Mammary epithelial cell (primary cell): ENCODE measurements at regions of chr11 and their contacts with region 1.

Region 1: GRCh38 chr11:13261591-13262061 is 16.0 kb upstream of the BMAL1 start:
- DNase-seq: peak; percentile 89
- H3K4me3 ChIP-seq: no peak overlapping the region
- H3K27ac ChIP-seq: peak overlapping the region; percentile 100
- H3K4me1 ChIP-seq: peaks cover 59% of the 10 kb centered on the region
- H3K27me3 ChIP-seq: no peaks in the 10 kb centered on the region
- CTCF ChIP-seq: no peak

Region 2: DNA sequence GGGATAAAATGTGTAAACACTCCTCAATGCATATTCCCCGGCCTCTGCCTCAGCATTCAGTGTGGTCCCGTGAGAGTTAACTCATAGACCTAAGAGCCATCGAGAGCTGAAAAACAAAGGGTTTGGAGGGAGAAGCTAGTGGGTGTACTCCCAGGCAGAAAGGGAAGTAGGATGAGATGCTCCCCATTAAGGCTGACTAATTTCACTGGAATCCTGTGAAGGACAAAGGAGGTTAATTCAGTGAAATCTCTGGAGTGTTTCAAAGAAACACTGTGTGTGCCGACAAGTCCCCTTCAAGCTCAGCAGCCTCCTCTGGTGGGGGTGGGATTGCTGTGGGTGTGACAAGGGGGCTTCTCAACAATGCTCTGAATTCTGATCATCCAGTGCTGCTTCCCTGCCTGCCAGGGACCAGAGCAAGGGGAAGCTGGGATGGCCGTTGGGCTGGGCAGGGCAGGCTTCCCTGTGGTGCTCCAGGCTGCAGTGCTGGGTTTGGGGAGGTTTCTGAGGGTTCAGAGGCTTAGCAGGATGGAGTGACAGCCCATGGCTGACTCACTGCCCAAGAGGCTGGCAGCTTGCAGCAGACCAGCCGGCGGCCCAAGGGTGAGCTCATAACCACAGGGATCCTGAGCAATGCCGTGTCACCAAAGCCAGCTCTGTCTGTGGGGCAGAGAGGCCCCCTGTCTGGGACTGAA is 45.5 kb before region 1 on chr11:
- CTCF ChIA-PET with region 1: no interaction called
- dilution Hi-C with region 1: loop called (anchors 5 kb)
- in situ Hi-C with region 1: no loop called
- intact Hi-C with region 1: loop called (anchors 1 kb)
- DNase-seq: peak; percentile 96
- H3K4me3 ChIP-seq: peak overlapping the region in 1 of 3 experiments; percentile 25
- H3K27ac ChIP-seq: peak overlapping the region; percentile 95
- H3K4me1 ChIP-seq: peaks cover 34% of the 10 kb centered on the region
- H3K27me3 ChIP-seq: no peaks in the 10 kb centered on the region
- CTCF ChIP-seq: no peak

Region 3: GRCh38 chr11:13222285-13222684 is 39.3 kb before region 1 on chr11:
- CTCF ChIA-PET with region 1: no interaction called
- dilution Hi-C with region 1: loop called (anchors 5 kb)
- in situ Hi-C with region 1: no loop called
- intact Hi-C with region 1: no loop called
- DNase-seq: peak; percentile 80
- H3K4me3 ChIP-seq: no peak overlapping the region
- H3K27ac ChIP-seq: peak overlapping the region; percentile 21
- H3K4me1 ChIP-seq: peaks cover 37% of the 10 kb centered on the region
- H3K27me3 ChIP-seq: no peaks in the 10 kb centered on the region
- CTCF ChIP-seq: no peak

Region 4: DNA sequence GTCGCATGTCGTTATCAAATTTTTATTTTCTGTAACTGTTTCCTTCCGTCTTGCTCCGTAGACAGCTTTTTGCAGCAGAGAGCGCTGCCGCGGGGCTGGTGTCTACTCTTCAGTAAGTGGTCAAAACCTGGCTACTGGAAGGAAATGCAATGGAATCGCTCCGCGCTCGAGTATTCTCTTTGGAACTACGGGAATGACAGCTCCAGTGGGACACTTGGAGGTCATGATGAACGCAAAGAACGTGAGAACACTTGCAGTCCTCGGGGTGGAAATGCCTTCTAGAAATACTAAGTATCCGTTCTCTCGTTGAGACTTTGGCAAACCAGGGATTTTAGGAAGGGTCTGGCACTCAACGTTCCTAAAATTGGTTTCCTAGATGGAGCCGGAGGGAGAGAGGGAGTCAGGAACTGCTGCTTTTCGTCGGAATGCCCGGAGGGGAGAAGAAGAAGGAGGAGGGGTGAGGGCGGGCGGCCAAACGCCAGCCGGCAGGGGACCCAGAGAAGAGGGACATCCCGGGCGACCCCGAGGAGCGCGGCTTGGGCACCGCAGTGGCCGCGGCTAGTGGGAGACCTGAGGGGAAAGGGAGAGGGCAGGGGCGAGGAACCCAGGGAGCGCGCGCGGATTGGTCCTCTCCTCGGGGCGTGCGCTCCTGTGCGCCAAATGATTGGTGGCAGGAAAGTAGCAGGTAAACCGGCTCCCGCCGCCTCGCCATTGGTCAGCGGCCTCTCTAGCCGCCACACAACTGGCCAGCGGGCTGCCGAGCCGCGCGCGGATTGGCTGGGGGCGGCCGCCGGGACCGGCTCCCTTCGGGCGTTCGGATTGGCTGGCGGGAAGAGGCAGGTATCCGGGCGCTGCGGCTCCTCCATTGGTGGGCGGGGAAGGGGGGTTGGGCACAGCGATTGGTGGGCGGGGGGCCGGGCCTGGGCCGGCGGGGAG is 15.5 kb after region 1 on chr11:
- CTCF ChIA-PET with region 1: no interaction called
- dilution Hi-C with region 1: no loop called
- in situ Hi-C with region 1: no loop called
- intact Hi-C with region 1: loop called (anchors 1 kb)
- DNase-seq: peak; percentile 99
- H3K4me3 ChIP-seq: peak overlapping the region; percentile 83 to 96 (median 83)
- H3K27ac ChIP-seq: peak overlapping the region; percentile 75
- H3K4me1 ChIP-seq: peaks cover 17% of the 10 kb centered on the region
- H3K27me3 ChIP-seq: no peaks in the 10 kb centered on the region
- CTCF ChIP-seq: no peak

Region 5: GRCh38 chr11:13303668-13304649 is 42.3 kb after region 1 on chr11:
- CTCF ChIA-PET with region 1: interaction called, 10 read pairs
- dilution Hi-C with region 1: no loop called
- in situ Hi-C with region 1: no loop called
- intact Hi-C with region 1: no loop called
- DNase-seq: no peak
- H3K4me3 ChIP-seq: no peak overlapping the region
- H3K27ac ChIP-seq: no peak overlapping the region
- H3K4me1 ChIP-seq: peaks cover 4% of the 10 kb centered on the region
- H3K27me3 ChIP-seq: no peaks in the 10 kb centered on the region
- CTCF ChIP-seq: no peak

Region 6: GRCh38 chr11:13335319-13335718 is 73.7 kb after region 1 on chr11:
- CTCF ChIA-PET with region 1: interaction called, 3 read pairs
- dilution Hi-C with region 1: loop called (anchors 5 kb)
- in situ Hi-C with region 1: loop called (anchors 5 to 10 kb)
- intact Hi-C with region 1: loop called (anchors 1 kb)
- DNase-seq: peak; percentile 62
- H3K4me3 ChIP-seq: no peak overlapping the region
- H3K27ac ChIP-seq: peak overlapping the region; percentile 83
- H3K4me1 ChIP-seq: peaks cover 76% of the 10 kb centered on the region
- H3K27me3 ChIP-seq: no peaks in the 10 kb centered on the region
- CTCF ChIP-seq: peak; percentile 84 to 86